ENCODE measurements at regions of chr11 and their contacts with region 1.

Region 1: DNA sequence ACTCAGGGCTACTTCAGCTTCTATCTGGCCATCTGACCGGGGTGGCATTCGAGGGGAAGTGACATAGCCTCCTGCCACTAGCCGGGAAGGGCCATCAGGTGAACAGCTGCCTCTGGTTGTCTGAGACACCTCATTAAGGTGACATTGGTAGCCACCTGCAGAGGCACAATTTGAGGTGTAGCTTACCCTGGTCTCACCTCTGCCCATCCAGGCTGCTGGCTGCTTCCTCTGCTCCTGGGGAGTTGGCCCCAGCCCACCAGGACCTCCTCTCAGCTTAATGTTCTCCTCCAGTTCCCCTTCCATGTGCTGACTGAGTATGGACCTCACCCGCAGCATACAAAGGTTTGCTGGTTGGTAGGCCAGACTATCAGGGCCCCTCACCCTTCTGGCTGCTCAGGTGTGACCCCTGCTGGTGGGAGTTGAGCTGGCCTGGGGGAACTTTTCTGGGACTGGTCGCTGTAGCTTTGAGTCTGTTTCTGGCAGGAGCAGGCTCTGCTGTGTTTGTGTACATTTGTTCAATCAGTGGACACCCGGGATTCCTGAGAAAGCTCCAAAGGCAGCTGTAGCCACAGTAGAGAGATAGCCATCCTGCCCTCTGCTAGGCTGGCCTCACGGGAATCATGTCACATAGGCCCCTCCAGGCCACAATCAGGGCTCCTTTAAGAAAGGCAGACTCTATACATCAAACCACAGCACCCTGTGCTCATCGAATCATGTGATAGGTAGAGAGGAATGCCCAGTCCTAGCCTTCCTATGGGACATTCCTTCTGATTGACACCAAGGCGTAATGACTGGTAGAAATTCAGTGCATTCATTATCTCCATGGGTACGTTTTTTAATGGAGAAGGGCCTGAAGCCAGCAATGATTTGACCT is 295.1 kb upstream of the PLET1 start:
- H3K4me3 Mint-ChIP-seq: no peak overlapping the region
- H3K27ac Mint-ChIP-seq: no peak overlapping the region
- H3K4me1 Mint-ChIP-seq: peaks cover 5% of the 10 kb centered on the region
- H3K27me3 Mint-ChIP-seq: peaks cover 1% of the 10 kb centered on the region

Region 2: GRCh38 chr11:112172362-112172994 is 383.2 kb before region 1 on chr11:
- intact Hi-C with region 1: no loop called
- H3K4me3 Mint-ChIP-seq: no peak overlapping the region
- H3K27ac Mint-ChIP-seq: no peak overlapping the region
- H3K4me1 Mint-ChIP-seq: peaks cover 12% of the 10 kb centered on the region
- H3K27me3 Mint-ChIP-seq: no peaks in the 10 kb centered on the region

Region 3: DNA sequence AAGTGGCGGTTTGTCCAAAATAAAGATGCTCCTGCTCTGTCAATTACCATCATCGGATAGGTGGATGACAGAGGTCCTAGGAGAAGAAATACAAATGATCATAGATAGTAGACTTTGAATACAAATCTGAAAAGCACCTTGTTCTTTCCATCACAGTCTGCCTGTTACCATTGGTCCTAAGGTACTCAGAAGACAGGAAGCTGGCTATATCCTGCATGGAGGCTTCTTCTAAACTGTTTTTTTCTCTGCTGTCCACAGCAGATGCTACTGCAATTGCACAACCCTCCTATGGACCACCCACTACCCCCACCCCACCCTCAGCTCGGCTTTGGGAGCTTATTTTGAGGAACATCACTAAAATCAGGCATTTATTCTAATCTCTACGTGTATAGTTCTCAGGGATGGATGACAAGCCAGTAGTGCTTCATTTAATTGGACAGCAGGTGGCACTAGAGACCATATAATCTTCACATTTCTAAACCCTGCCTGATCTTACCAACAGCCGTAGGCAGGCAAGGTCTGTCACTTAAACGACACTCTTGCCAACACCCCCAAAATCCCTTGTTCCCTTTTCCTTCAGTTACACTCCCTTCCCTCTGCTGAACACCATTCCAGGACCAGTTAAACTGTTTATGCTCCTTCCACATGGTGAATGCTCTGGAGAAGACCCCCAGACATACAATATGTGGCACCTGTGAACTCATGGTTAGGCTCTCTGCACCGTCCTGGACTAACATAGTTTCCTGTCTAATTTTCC is 336.1 kb before region 1 on chr11:
- intact Hi-C with region 1: loop called (anchors 2 kb)
- H3K4me3 Mint-ChIP-seq: no peak overlapping the region
- H3K27ac Mint-ChIP-seq: peak overlapping the region; percentile 45
- H3K4me1 Mint-ChIP-seq: peaks cover 13% of the 10 kb centered on the region
- H3K27me3 Mint-ChIP-seq: no peaks in the 10 kb centered on the region

Region 4: DNA sequence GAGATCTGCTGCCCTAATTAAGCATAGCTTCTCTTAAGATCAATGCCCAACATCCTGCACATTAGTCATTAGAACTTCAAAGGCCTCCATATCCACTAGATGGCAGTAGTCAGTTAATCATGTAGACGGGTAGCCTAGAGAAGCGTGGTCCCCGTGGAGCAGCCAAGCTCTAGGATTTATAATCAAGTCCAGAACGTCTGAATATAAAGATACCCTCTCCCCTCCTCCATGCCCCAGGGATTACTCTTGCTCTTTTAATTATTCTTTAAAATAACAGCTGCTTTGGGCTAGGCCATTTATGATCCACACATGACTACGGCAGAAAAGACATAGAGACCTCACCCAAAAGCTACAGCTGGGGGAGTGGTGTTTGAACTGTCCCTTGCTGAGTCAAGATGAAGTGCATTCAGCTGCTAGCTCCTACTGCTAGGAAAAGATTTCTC is 32.5 kb after region 1 on chr11:
- intact Hi-C with region 1: no loop called
- H3K4me3 Mint-ChIP-seq: no peak overlapping the region
- H3K27ac Mint-ChIP-seq: no peak overlapping the region
- H3K4me1 Mint-ChIP-seq: peaks cover 8% of the 10 kb centered on the region
- H3K27me3 Mint-ChIP-seq: peaks cover 11% of the 10 kb centered on the region

Region 5: GRCh38 chr11:112620606-112621394 is 65.1 kb after region 1 on chr11:
- intact Hi-C with region 1: no loop called
- H3K4me3 Mint-ChIP-seq: no peak overlapping the region
- H3K27ac Mint-ChIP-seq: peak overlapping the region; percentile 55
- H3K4me1 Mint-ChIP-seq: peaks cover 59% of the 10 kb centered on the region
- H3K27me3 Mint-ChIP-seq: no peaks in the 10 kb centered on the region